ENCODE measurements at regions of chr12 and their contacts with region 1.

Region 1: GRCh38 chr12:93198086-93198485 is 179.6 kb upstream of the NUDT4 start:
- DNase-seq: peak; percentile 76 to 95
- H3K4me3 ChIP-seq: no peak overlapping the region
- H3K27ac ChIP-seq: peak overlapping the region; percentile 74
- H3K4me1 ChIP-seq: peaks cover 43% of the 10 kb centered on the region
- H3K27me3 ChIP-seq: no peaks in the 10 kb centered on the region
- CTCF ChIP-seq: no peak

Region 2: DNA sequence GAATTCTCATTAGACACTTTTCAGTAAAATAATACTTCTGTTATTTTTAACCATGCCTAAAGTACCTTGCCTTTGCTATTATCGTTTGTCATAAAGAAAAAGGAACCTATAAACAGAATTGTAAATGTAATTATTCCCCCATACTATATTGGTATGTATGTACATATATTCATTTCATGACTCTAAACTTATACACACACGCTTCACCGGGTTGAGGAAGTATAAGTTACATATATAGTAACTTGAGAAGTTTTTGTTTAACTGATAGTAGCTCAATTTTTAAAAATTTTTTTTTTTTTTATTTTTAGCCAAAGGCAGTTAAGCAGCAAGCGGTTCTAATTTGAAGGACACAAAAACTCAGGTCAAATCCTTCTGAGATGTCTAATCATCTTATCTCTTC is 387.7 kb before region 1 on chr12:
- CTCF ChIA-PET with region 1: no interaction called
- POLR2A ChIA-PET with region 1: no interaction called
- intact Hi-C with region 1: no loop called
- DNase-seq: no peak
- H3K4me3 ChIP-seq: no peak overlapping the region
- H3K27ac ChIP-seq: no peak overlapping the region
- H3K4me1 ChIP-seq: no peaks in the 10 kb centered on the region
- H3K27me3 ChIP-seq: no peaks in the 10 kb centered on the region
- CTCF ChIP-seq: no peak

Region 3: GRCh38 chr12:93137656-93138612 is 60.2 kb before region 1 on chr12:
- CTCF ChIA-PET with region 1: no interaction called
- POLR2A ChIA-PET with region 1: no interaction called
- intact Hi-C with region 1: loop called (anchors 2 kb)
- DNase-seq: peak; percentile 33 to 89
- H3K4me3 ChIP-seq: no peak overlapping the region
- H3K27ac ChIP-seq: peak overlapping the region; percentile 45
- H3K4me1 ChIP-seq: peaks cover 56% of the 10 kb centered on the region
- H3K27me3 ChIP-seq: no peaks in the 10 kb centered on the region
- CTCF ChIP-seq: no peak